CD4-positive, alpha-beta memory T cell (primary cell): ENCODE measurements at regions of chr16 and their contacts with region 1.

Region 1: DNA sequence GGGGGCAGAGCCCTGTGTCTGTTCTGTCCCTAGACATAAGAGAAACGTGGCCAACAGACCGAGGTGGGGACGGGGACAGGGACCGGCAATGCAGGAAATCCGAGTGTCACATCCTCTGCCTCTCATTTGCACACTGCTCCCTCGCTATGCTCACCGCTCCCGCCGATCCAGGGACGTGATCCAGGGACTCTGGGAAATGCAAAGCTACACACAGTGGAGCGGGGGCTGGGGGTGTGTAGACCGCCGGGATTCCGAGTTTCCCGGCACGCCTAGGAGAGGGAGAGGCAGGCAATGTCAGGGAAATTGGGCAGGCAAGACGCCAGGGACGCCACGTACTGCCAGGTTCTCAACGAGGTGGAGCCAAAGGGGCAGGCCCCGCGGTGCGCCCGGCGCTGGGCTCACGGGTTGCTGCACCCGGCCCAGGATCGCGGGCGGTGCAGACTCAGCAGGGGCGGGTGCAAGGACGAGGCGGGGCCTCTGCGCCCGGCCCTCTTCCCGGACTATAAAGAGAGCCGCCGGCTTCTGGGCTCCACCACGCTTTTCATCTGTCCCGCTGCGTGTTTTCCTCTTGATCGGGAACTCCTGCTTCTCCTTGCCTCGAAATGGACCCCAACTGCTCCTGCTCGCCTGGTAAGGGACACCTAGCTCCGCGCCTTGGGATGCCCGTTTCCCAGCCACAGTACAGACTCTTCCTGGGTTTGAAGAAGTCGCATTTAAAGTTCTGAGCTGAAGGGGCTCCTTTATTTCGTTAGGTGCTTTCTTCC is at the start of gene MT1X:
- DNase-seq: peak; percentile 83 to 93 (median 92)
- H3K4me3 ChIP-seq: peak within 1 kb of the TSS; percentile 64 to 79
- H3K4me3 Mint-ChIP-seq: peak within 1 kb of the TSS; percentile 94 to 99 (median 96)
- H3K27ac ChIP-seq: peak within 1 kb of the TSS; percentile 74
- H3K27ac Mint-ChIP-seq: peak within 1 kb of the TSS; percentile 96 to 99 (median 97)
- H3K4me1 ChIP-seq: peaks cover 22% of the 10 kb centered on the region
- H3K4me1 Mint-ChIP-seq: peaks cover 13 to 31% (median 18%) of the 10 kb centered on the region in 4 donors
- H3K27me3 ChIP-seq: no peaks in the 10 kb centered on the region
- H3K27me3 Mint-ChIP-seq: no peaks in the 10 kb centered on the region
- total RNA-seq, gene MT1X: 21.0 to 23.7 TPM

Region 2: DNA sequence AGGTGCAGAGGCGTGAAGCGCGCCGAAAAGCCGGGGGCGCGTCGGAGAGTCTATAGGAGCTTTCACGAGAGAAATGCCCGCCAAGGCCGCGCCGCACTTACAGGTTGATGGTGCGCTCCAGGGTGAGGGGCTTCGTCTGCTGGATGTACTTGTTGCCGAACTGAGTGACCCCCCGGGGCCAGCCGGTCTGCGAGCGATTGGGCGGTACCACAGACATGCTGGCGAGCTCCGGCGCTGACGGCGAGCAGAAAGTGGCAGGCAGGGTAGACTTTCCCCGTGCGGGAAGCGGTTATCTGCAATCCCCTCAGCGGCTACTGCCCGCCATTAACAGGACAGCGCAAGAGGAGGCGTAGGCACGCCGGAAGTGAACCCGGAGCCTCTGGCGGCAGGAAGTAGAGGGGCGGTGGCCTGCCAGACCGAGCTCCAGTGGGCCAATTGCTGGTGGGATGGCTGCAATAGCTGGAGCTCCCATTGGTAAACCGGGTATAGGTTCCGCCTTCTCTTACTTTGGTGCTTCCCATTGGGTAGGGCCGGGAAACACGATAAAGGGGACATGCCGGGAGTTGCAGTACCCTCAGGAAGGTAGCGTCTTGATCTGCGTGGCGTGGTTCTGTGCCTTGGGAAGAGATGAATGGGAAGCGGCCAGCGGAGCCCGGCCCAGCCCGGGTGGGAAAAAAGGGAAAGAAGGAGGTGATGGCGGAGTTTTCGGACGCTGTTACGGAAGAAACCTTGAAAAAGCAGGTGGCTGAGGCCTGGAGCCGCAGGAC is 231.0 kb before region 1 on chr16 and contains the starts of genes NUDT21 and OGFOD1:
- CTCF ChIA-PET with region 1: no interaction called
- POLR2A ChIA-PET with region 1: interaction called, 4 read pairs
- intact Hi-C with region 1: loop called (anchors 5 kb)
- DNase-seq: peak; percentile 92 to 97 (median 94)
- H3K4me3 ChIP-seq: peak within 1 kb of the TSS; percentile 54 to 95
- H3K4me3 Mint-ChIP-seq: peak within 1 kb of the TSS; percentile 96 to 100 (median 99)
- H3K27ac ChIP-seq: peak within 1 kb of the TSS; percentile 73
- H3K27ac Mint-ChIP-seq: peak within 1 kb of the TSS; percentile 89 to 100 (median 98)
- H3K4me1 ChIP-seq: peaks cover 57% of the 10 kb centered on the region
- H3K4me1 Mint-ChIP-seq: peaks cover 38 to 69% (median 56%) of the 10 kb centered on the region in 4 donors
- H3K27me3 ChIP-seq: no peaks in the 10 kb centered on the region
- H3K27me3 Mint-ChIP-seq: no peaks in the 10 kb centered on the region
- total RNA-seq, gene NUDT21: 109 to 110 TPM
- total RNA-seq, gene OGFOD1: 42.7 to 47.2 TPM

Region 3: DNA sequence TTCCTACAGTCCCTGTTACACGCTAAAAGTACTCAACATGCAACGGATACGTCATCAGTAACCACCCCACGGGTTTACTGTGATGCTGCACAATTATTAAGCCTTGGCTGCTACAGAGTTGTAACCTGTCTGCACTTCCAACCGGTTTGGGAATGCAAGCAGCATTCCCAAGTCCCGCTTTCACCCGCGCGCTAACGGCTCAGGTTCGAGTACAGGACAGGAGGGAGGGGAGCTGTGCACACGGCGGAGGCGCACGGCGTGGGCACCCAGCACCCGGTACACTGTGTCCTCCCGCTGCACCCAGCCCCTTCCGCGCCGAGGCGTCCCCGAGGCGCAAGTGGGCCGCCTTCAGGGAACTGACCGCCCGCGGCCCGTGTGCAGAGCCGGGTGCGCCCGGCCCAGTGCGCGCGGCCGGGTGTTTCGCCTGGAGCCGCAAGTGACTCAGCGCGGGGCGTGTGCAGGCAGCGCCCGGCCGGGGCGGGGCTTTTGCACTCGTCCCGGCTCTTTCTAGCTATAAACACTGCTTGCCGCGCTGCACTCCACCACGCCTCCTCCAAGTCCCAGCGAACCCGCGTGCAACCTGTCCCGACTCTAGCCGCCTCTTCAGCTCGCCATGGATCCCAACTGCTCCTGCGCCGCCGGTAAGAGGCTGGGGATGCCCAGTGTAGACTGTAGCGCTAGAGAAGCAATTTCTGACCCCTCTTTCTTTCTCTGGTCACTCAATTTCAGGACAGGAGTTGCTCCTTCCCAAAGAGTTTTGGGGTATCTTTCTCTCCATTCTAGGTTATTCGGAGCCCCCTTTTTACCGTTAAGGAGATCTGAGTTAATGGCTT is 73.9 kb before region 1 on chr16 and contains the start of gene MT2A:
- CTCF ChIA-PET with region 1: interaction called, 3 read pairs
- POLR2A ChIA-PET with region 1: interaction called, 30 read pairs
- intact Hi-C with region 1: loop called (anchors 1 kb)
- DNase-seq: peak; percentile 81 to 93 (median 85)
- H3K4me3 ChIP-seq: peak within 1 kb of the TSS; percentile 70 to 94
- H3K4me3 Mint-ChIP-seq: peak within 1 kb of the TSS; percentile 92 to 99 (median 98)
- H3K27ac ChIP-seq: peak within 1 kb of the TSS; percentile 82
- H3K27ac Mint-ChIP-seq: peak within 1 kb of the TSS; percentile 88 to 100 (median 96)
- H3K4me1 ChIP-seq: peaks cover 46% of the 10 kb centered on the region
- H3K4me1 Mint-ChIP-seq: peaks cover 26 to 53% (median 39%) of the 10 kb centered on the region in 4 donors
- H3K27me3 ChIP-seq: no peaks in the 10 kb centered on the region
- H3K27me3 Mint-ChIP-seq: peaks cover 0 to 3% of the 10 kb centered on the region in 2 donors
- total RNA-seq, gene MT2A: 15.8 to 17.7 TPM

Region 4: DNA sequence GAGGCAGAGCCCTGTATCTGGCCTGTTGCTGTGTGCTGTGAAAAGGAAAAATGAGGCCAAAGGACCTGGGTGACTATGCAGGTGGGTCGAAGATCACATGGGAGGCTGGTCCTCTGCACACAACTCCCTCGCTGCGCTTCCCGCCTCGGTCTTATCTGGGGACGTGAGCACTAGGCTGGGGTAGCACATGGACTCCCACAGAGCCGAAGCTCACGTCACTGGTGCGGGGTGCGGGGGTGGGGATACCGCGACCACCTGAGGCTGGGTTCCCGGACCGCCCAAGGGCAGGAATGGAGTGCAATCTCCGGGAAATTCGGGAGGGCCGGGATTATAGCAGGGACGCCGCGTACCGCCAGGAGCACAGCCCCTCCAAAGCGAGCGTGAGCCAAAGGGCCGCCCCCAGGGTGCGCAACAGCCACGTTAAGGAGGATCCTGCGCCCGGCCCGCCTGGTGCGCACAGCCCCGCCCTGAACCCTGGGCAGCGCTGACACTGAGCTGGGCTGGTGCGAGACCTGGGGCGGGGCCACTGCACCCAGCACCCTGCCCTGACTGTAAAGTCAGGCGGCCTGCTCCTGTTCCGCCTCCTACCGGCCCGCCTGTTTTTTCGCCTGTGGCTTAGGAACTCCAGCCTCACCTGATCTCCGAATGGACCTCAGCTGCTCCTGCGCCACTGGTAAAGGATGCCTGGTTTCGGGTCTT is 38.9 kb before region 1 on chr16:
- CTCF ChIA-PET with region 1: interaction called, 10 read pairs
- POLR2A ChIA-PET with region 1: interaction called, 21 read pairs
- intact Hi-C with region 1: loop called (anchors 2 kb)
- DNase-seq: peak; percentile 63 to 76 (median 71)
- H3K4me3 ChIP-seq: peak overlapping the region in 1 of 2 donors; percentile 0
- H3K4me3 Mint-ChIP-seq: peak overlapping the region; percentile 75 to 84 (median 79)
- H3K27ac ChIP-seq: no peak overlapping the region
- H3K27ac Mint-ChIP-seq: peak overlapping the region in 5 of 7 donors; percentile 63 to 77 (median 67)
- H3K4me1 ChIP-seq: peaks cover 16% of the 10 kb centered on the region
- H3K4me1 Mint-ChIP-seq: peaks cover 18 to 22% (median 19%) of the 10 kb centered on the region in 4 donors
- H3K27me3 ChIP-seq: peaks cover 14% of the 10 kb centered on the region
- H3K27me3 Mint-ChIP-seq: peaks cover 12 to 23% of the 10 kb centered on the region in 2 donors

Region 5: DNA sequence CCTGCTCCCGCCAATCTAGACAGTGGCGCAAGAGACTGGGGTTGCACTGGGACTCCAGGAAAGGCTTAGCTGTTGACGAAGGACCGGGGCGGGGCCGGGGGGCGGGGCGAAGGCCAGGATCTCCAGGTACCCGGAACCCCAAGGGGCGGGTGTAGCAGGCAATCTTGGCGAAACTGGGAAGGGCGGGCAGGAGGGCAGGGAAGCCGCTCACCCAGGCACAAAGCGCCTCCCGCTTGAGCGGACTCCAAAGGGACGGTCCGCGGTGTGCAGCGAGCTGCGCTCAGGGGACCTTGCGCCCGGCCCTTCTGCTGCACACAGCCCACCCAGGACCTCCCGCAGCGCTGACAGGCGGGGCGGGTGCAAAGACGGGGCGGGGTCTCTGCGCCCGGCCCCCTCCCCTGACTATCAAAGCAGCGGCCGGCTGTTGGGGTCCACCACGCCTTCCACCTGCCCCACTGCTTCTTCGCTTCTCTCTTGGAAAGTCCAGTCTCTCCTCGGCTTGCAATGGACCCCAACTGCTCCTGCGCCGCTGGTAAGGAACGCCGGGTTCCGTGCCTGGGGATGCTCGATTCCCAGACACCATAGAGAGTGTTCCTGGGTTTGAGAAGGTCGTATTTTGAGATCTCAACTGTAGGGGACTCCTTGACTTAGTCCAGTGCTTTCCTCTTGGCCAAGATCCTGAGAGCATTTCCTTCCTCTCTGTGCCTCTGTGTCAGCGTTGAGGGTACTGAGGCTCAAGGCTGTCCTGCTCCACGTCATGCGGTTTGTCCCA is 24.4 kb before region 1 on chr16 and contains the start of gene MT1F:
- CTCF ChIA-PET with region 1: no interaction called
- POLR2A ChIA-PET with region 1: interaction called, 8 read pairs
- intact Hi-C with region 1: loop called (anchors 2 kb)
- DNase-seq: peak; percentile 40 to 78 (median 53)
- H3K4me3 ChIP-seq: peak within 1 kb of the TSS; percentile 62 to 65
- H3K4me3 Mint-ChIP-seq: peak within 1 kb of the TSS; percentile 90 to 99 (median 96)
- H3K27ac ChIP-seq: peak within 1 kb of the TSS; percentile 39
- H3K27ac Mint-ChIP-seq: peak within 1 kb of the TSS; percentile 79 to 97 (median 93)
- H3K4me1 ChIP-seq: peaks cover 17% of the 10 kb centered on the region
- H3K4me1 Mint-ChIP-seq: peaks cover 16 to 35% (median 24%) of the 10 kb centered on the region in 4 donors
- H3K27me3 ChIP-seq: no peaks in the 10 kb centered on the region
- H3K27me3 Mint-ChIP-seq: peaks cover 2 to 4% of the 10 kb centered on the region in 2 donors
- total RNA-seq, gene MT1F: 8.3 to 12.9 TPM

Region 6: GRCh38 chr16:56729735-56730662 is 47.9 kb after region 1 on chr16 and contains the start of gene NUP93:
- CTCF ChIA-PET with region 1: no interaction called
- POLR2A ChIA-PET with region 1: no interaction called
- intact Hi-C with region 1: loop called (anchors 1 kb)
- DNase-seq: peak; percentile 87 to 92 (median 89)
- H3K4me3 ChIP-seq: peak within 1 kb of the TSS; percentile 76 to 81
- H3K4me3 Mint-ChIP-seq: peak within 1 kb of the TSS in 4 of 8 donors; percentile 85 to 95 (median 93)
- H3K27ac ChIP-seq: peak within 1 kb of the TSS; percentile 70
- H3K27ac Mint-ChIP-seq: peak within 1 kb of the TSS in 6 of 7 donors; percentile 82 to 98 (median 96)
- H3K4me1 ChIP-seq: peaks cover 35% of the 10 kb centered on the region
- H3K4me1 Mint-ChIP-seq: peaks cover 13 to 36% (median 14%) of the 10 kb centered on the region in 4 donors
- H3K27me3 ChIP-seq: no peaks in the 10 kb centered on the region
- H3K27me3 Mint-ChIP-seq: no peaks in the 10 kb centered on the region
- total RNA-seq, gene NUP93: 48.0 to 56.5 TPM

Region 7: GRCh38 chr16:57000271-57001025 is 318.3 kb after region 1 on chr16:
- CTCF ChIA-PET with region 1: no interaction called
- POLR2A ChIA-PET with region 1: no interaction called
- intact Hi-C with region 1: no loop called
- DNase-seq: peak in 1 of 5 donors; percentile 77
- H3K4me3 ChIP-seq: peak overlapping the region; percentile 36 to 66
- H3K4me3 Mint-ChIP-seq: peak overlapping the region; percentile 71 to 90 (median 81)
- H3K27ac ChIP-seq: peak overlapping the region; percentile 79
- H3K27ac Mint-ChIP-seq: peak overlapping the region; percentile 89 to 98 (median 97)
- H3K4me1 ChIP-seq: peaks cover 95% of the 10 kb centered on the region
- H3K4me1 Mint-ChIP-seq: peaks cover 69 to 99% (median 84%) of the 10 kb centered on the region in 4 donors
- H3K27me3 ChIP-seq: no peaks in the 10 kb centered on the region
- H3K27me3 Mint-ChIP-seq: no peaks in the 10 kb centered on the region